ENCODE measurements at regions of chr3 and their contacts with region 1.

Region 1: DNA sequence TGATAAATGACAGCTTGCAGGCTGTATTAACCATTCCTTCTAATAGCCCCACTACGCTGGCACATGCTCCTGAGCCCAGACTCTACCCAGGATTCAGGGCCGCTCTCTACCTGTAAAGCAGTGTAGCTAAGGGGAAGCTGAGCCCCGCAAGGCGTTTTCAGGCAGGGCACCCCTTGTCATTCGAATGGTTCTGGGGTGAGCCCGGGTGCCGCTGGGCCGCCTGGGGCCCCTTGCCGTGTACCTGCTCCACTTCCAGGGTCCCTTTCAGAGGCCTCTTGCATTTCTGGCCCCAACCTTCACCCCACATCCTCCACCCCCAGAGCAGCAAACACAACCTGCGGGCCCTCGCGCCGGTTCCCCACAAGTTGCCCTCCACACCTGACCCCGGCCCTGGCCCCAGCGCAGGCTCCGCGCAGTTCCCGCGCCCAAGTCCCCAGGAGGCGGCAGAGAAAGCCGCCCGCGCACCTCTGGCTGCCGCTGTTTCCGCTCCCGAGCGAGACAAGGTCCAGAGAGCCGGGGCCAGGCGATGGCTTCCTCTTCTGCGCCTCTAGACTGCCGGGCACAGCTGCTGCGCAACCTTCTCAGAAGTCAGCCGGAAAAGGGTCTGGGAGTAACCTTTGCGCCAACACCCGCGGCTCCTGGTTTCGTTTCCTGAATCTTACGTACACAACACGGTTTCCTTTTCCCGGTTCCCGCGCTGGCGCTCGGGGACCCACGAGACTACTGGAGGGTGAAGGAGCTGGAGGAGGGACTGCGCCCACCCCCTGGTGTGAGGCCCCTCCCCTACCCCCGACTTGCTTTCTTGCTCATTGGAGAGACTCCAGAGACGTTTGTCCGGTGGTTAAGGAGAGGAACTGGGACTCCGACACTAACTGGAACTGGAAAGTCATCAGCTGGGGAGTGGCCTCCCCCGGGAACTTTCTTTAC is at the start of gene PLSCR1:
- DNase-seq: peak; percentile 89
- ATAC-seq: peak; percentile 87
- H3K4me3 ChIP-seq: peak within 1 kb of the TSS; percentile 53 to 90 (median 74)
- H3K4me3 Mint-ChIP-seq: peak within 1 kb of the TSS; percentile 96
- H3K27ac ChIP-seq: peak within 1 kb of the TSS; percentile 29 to 77
- H3K27ac Mint-ChIP-seq: peak within 1 kb of the TSS; percentile 94
- H3K4me1 ChIP-seq: peaks cover 31 to 43% of the 10 kb centered on the region in 2 donors
- H3K4me1 Mint-ChIP-seq: peaks cover 65% of the 10 kb centered on the region
- H3K27me3 ChIP-seq: no peaks in the 10 kb centered on the region
- H3K27me3 Mint-ChIP-seq: no peaks in the 10 kb centered on the region
- CTCF ChIP-seq: no peak
- total RNA-seq, gene PLSCR1: 44.6 and 50.5 TPM in 2 replicates

Region 2: DNA sequence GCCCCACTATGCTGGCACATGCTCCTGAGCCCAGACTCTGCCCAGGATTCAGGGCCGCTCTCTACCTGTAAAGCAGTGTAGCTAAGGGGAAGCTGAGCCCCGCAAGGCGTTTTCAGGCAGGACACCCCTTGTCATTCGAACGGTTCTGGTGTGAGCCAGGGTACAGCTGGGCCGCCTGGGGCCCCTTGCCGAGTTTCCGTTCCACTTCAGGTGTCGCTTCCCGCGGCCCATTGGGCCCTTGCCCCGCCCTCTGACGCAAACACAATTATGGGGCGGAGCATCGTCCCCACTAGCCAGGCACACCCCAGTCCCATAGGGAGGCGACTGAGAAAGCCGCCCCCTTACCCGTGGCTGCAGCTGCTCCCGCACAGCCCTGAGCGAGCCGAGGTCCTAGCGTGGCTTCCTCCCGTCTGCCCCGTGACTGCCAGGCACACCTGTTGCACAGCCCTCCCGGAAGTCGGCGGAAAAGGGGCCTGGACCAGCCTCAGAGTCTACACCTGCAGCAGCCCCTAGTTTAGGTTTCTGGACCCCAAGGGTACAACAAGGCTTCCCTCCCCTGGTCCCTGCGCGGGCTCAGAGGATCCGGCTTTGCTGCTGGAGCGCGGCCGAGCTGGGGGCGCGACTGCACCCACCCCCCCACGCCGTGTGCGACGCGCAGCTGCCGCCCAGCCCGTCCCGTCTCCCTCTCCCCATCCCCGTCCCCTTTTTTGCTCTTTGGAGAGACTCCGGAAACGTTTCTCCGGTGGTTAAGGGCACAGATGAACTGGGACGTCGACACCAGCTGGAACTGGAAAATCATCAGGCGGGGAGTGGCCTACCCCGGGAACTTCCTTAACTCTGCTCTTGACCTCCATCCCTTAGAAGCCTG is 74.9 kb before region 1 on chr3 and contains the start of gene PLSCR2:
- CTCF ChIA-PET with region 1: interaction called, 3 read pairs
- POLR2A ChIA-PET with region 1: interaction called, 9 read pairs
- intact Hi-C with region 1: loop called (anchors 1 kb)
- DNase-seq: peak; percentile 91
- ATAC-seq: peak; percentile 98
- H3K4me3 ChIP-seq: peak within 1 kb of the TSS in 4 of 5 experiments; percentile 61 to 73 (median 68)
- H3K4me3 Mint-ChIP-seq: peak within 1 kb of the TSS; percentile 89
- H3K27ac ChIP-seq: peak within 1 kb of the TSS; percentile 70 to 85
- H3K27ac Mint-ChIP-seq: peak within 1 kb of the TSS; percentile 91
- H3K4me1 ChIP-seq: peaks cover 4 to 13% of the 10 kb centered on the region in 2 donors
- H3K4me1 Mint-ChIP-seq: peaks cover 17% of the 10 kb centered on the region
- H3K27me3 ChIP-seq: no peaks in the 10 kb centered on the region
- H3K27me3 Mint-ChIP-seq: no peaks in the 10 kb centered on the region
- CTCF ChIP-seq: no peak
- total RNA-seq, gene PLSCR2: 0.54 and 0.61 TPM in 2 replicates

Region 3: GRCh38 chr3:146747928-146748327 is 203.7 kb after region 1 on chr3:
- CTCF ChIA-PET with region 1: no interaction called
- POLR2A ChIA-PET with region 1: no interaction called
- intact Hi-C with region 1: no loop called
- DNase-seq: no peak
- ATAC-seq: no peak
- H3K4me3 ChIP-seq: no peak overlapping the region
- H3K4me3 Mint-ChIP-seq: no peak overlapping the region
- H3K27ac ChIP-seq: no peak overlapping the region
- H3K27ac Mint-ChIP-seq: no peak overlapping the region
- H3K4me1 ChIP-seq: no peaks in the 10 kb centered on the region
- H3K4me1 Mint-ChIP-seq: no peaks in the 10 kb centered on the region
- H3K27me3 ChIP-seq: no peaks in the 10 kb centered on the region
- H3K27me3 Mint-ChIP-seq: no peaks in the 10 kb centered on the region
- CTCF ChIP-seq: no peak